HCT116 (cell line): ENCODE measurements at regions of chr7 and their contacts with region 1.

Region 1: DNA sequence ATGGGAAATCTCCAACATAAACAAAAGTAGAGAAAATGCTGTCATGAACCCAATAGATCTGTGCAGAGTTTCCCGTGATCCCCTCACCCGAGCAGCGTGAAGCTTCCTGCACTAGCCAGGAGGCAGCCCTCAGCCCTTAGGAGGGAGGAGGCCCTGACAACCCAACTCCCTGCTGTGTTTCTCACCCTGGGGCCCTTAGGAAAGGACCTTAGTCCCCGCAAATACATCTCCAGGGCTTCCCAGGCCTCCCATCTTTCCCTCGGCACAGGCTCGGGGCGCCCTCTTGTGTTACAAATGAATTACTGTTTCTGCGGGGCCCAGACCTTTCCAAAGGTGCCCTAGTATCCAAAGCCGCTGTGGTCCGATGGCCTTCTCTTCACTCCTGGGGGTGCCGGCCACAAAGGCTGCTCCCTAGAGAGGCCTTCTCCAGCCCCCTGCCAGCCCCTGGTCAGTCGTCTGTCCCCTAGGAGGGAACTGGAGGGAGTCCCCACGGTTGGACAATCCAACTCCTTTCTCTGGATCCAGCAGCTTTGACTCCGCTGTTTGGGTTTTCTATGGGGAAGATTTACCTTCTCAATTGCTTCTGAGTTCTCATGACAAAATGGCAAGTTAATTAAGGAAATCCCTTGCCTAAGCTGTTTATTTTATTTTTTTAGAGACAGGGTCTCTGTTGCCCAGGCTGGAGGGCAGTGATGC is 49.9 kb upstream of the SH2B2 start:
- DNase-seq: peak; percentile 28
- ATAC-seq: peak; percentile 96
- H3K4me3 ChIP-seq: no peak overlapping the region
- H3K27ac ChIP-seq: no peak overlapping the region
- H3K4me1 ChIP-seq: peaks cover 0 to 13% of the 10 kb centered on the region in 2 experiments; a peak in 1 of 4 replicates
- H3K27me3 ChIP-seq: no peaks in the 10 kb centered on the region
- CTCF ChIP-seq: peak; percentile 75 to 90 (median 86); a peak in 5 of 6 replicates
- POLR2A ChIP-seq: no peak
- RAD21 ChIP-seq: peak; percentile 98

Region 2: DNA sequence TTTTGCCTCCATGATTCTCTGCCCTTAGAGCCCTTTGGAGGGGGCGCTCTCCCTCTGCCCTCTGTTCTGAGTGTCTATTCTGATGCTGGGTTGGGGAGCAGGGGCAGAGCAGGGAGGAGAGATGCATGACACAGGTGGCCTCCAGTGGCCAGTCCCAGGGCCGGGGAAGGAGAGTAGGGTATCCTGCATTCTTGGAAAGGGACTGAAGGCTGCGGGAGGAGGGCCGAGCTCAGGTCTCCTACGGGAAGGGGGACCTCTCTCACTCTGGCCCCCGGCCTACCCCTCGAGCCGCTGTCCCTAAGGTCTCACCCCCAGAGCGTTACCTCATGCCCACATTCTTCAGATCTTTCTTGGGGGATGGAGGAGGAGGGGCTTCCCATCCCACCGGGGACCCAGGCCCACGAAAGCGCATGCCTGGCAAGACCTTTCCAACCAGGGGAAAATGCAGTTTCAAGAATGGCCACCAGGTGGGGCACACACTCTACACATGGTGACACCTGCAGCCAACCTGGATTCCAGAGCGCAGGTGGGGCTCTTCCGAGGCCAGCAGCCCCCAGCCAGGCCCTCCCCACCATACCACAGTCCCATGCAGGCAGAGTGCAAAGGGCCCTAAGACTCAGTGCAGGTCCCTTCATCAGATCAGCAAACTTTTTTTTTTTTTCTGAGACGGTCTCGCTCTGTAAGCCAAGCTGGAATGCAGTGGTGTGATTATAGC is 694.1 kb before region 1 on chr7:
- CTCF ChIA-PET with region 1: interaction called, 3 read pairs
- POLR2A ChIA-PET with region 1: no interaction called
- RAD21 ChIA-PET with region 1: no interaction called
- intact Hi-C with region 1: loop called (anchors 1 kb)
- DNase-seq: peak; percentile 33
- ATAC-seq: peak; percentile 71
- H3K4me3 ChIP-seq: no peak overlapping the region
- H3K27ac ChIP-seq: no peak overlapping the region
- H3K4me1 ChIP-seq: peaks cover 0 to 18% of the 10 kb centered on the region in 2 experiments; a peak in 2 of 4 replicates
- H3K27me3 ChIP-seq: no peaks in the 10 kb centered on the region
- CTCF ChIP-seq: peak; percentile 79 to 89 (median 88); a peak in 5 of 6 replicates
- POLR2A ChIP-seq: no peak
- RAD21 ChIP-seq: peak; percentile 99

Region 3: DNA sequence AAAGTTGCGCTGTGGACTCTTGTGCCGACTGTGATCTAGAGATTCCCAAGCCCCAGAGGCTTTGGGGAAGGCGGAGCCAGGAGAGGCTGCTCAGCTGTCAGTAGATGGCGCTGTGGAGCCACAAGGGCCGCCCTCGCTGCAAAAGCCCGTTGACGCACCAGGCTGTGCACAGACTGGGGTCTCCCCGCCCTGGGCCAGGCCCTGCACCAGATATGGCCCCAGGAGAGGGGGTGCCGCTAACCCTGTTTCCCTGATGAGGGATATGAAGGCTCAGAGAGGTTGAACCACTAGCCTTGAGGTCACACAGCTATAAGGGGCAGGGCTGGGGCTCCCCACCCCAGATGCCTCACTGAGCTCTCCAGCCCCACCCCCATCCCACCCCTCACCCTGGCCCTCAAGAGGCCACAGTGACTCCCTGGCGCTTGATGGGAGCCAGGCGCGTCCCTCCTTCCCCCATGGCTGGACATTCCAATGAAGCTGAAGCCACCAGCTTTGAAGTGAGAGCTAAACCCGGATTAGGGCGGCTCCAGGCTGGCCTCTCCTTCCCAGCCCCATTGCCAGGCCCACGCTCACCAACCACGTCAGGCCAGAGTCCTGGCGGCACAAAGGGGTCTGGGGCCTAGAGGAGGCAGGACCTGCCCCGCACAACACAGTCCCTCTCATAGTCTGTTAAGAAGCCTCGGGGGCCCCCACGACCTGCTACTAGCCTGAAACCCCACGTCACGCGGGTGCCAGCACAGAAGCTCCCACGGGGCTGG is 634.1 kb before region 1 on chr7:
- CTCF ChIA-PET with region 1: no interaction called
- POLR2A ChIA-PET with region 1: no interaction called
- RAD21 ChIA-PET with region 1: no interaction called
- intact Hi-C with region 1: loop called (anchors 1 kb)
- DNase-seq: peak; percentile 59
- ATAC-seq: peak; percentile 88
- H3K4me3 ChIP-seq: no peak overlapping the region
- H3K27ac ChIP-seq: no peak overlapping the region
- H3K4me1 ChIP-seq: peaks cover 19 to 30% of the 10 kb centered on the region in 2 experiments; a peak in 3 of 4 replicates
- H3K27me3 ChIP-seq: no peaks in the 10 kb centered on the region
- CTCF ChIP-seq: peak; percentile 82 to 96 (median 95)
- POLR2A ChIP-seq: no peak
- RAD21 ChIP-seq: peak; percentile 98

Region 4: GRCh38 chr7:101688183-101688831 is 548.4 kb before region 1 on chr7:
- CTCF ChIA-PET with region 1: no interaction called
- POLR2A ChIA-PET with region 1: no interaction called
- RAD21 ChIA-PET with region 1: no interaction called
- intact Hi-C with region 1: loop called (anchors 1 kb)
- DNase-seq: peak; percentile 34
- ATAC-seq: peak; percentile 94
- H3K4me3 ChIP-seq: peak overlapping the region; percentile 27 to 42
- H3K27ac ChIP-seq: no peak overlapping the region; the same call in 1 of the 2 replicates
- H3K4me1 ChIP-seq: peaks cover 5 to 13% of the 10 kb centered on the region in 2 experiments; a peak in 3 of 4 replicates
- H3K27me3 ChIP-seq: no peaks in the 10 kb centered on the region
- CTCF ChIP-seq: peak; percentile 82 to 89 (median 84)
- POLR2A ChIP-seq: no peak
- RAD21 ChIP-seq: peak; percentile 98

Region 5: DNA sequence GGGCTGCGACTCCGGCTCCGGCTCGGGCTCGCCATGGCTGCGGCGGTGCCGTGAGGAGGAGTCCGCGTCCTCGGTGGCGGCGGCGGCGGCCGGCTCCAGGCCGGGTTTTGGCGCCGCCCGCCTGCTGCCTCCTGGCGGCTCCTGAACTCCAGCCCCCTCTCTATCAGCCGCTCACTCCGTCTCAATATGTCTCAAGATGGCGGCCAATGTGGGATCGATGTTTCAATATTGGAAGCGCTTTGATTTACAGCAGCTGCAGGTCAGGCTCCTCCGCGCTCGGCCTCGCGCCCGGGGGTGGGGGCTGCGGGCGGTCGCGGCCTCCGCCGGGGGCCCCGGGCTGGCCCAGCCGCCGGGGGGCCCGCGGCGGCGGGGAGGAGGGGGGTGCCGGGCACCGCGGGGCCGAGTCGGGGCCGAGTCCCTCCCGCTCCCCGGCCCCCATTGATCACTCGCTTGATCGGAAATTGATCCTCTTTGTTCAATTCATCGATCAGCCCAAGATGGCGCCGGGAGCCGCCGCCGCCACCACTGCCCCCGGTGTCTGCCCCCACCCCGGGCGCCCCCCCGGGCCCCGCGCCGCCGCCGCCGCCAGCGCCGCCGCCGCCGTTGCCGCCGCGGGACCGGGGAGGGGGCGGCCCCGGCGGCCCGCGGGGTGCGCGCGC is 420.8 kb before region 1 on chr7:
- CTCF ChIA-PET with region 1: interaction called, 3 read pairs
- POLR2A ChIA-PET with region 1: no interaction called
- RAD21 ChIA-PET with region 1: no interaction called
- intact Hi-C with region 1: loop called (anchors 2 kb)
- DNase-seq: peak; percentile 73
- ATAC-seq: peak; percentile 61
- H3K4me3 ChIP-seq: peak overlapping the region; percentile 49 to 57
- H3K27ac ChIP-seq: peak overlapping the region; percentile 77
- H3K4me1 ChIP-seq: peaks cover 24 to 50% of the 10 kb centered on the region in 2 experiments
- H3K27me3 ChIP-seq: no peaks in the 10 kb centered on the region
- CTCF ChIP-seq: no peak; a peak in 1 of 6 replicates
- POLR2A ChIP-seq: no peak
- RAD21 ChIP-seq: no peak

Region 6: DNA sequence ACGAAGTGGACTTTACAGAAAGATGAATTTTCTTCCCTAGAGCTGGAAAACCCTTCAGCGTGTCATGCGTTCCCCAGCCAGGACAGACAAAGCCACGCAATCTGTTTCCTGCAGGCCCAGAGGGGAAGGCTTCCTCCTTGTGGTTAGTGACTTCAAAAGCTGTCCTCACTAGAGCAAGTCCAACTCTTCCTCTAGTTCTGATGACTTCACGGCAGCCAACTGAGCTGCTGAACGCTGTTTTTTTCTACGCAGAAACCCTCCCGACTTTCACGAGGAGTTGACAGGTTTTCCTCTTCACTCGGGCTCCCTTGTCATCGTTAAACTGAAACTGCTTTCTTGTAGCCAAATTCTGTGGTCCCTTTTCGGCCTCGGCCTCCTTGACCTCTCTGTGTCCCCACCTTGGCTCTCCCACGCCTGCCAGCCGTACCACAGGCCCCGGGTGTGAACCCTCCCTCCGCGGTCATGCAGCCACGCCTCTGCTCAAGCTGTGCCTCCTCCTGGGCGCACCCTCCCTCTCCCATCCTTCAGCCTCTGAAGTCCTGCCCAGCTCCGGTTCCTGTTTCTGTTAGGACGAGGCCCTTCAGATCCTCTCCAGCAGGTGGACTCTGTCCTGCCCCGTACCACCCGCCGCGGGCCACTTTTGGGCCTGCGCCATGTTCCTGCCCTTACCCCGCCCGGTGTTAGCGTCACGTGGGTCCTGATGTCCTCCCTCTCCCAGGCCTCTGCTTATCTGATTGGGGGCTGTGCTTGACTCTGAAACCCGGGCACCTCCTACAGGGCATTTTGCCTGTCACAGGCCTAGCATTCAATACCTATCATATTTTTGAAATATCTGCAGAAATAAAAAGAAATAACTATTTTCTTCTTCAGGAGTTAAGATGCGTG is 380.0 kb before region 1 on chr7:
- CTCF ChIA-PET with region 1: no interaction called
- POLR2A ChIA-PET with region 1: no interaction called
- RAD21 ChIA-PET with region 1: no interaction called
- intact Hi-C with region 1: loop called (anchors 10 kb)
- DNase-seq: peak; percentile 97
- ATAC-seq: peak; percentile 95
- H3K4me3 ChIP-seq: peak overlapping the region; percentile 23 to 45
- H3K27ac ChIP-seq: peak overlapping the region; percentile 69
- H3K4me1 ChIP-seq: peaks cover 22 to 52% of the 10 kb centered on the region in 2 experiments
- H3K27me3 ChIP-seq: no peaks in the 10 kb centered on the region
- CTCF ChIP-seq: peak; percentile 28 to 64 (median 59); a peak in 4 of 6 replicates
- POLR2A ChIP-seq: no peak
- RAD21 ChIP-seq: peak; percentile 75

Region 7: DNA sequence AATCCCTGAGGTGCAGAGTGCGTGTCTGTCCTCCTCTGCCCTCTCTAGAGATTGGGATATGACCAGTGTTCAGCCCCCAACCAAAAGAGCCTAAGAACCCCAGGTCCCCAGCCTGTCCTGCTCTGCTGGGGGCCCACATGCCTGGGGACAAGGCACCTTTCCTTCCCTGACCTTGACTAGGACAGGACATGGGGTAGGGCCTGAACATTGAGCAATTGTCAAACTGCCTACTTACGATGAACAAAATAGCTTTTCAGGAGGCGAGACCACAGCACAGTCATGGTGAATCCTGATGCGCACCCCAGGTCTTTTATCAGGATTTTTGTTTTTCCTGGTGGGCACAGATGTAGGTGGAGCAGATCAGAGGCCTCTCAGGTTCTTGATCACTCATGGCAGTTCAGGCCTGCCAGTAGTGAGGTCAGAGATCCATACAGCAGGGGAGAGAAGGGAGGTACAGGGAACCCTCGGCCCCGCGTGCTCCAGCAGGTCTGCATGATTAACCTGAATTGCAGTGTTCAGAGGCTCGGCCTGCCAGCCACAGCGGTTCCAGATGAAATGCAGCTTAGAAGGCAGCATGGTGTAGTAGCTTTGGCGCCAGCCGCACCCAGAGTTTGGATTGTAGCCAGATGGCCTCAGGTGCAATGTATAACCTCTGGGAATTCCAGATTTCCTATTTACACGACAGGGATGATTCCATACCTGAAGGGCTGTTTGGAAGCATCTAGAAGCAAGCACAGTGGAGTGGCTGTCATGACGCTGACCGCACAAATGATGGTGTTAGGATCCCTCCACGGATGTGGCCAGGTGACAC is 228.0 kb before region 1 on chr7:
- CTCF ChIA-PET with region 1: no interaction called
- POLR2A ChIA-PET with region 1: no interaction called
- RAD21 ChIA-PET with region 1: no interaction called
- intact Hi-C with region 1: no loop called
- DNase-seq: no peak
- ATAC-seq: no peak
- H3K4me3 ChIP-seq: no peak overlapping the region
- H3K27ac ChIP-seq: no peak overlapping the region
- H3K4me1 ChIP-seq: peaks cover 7 to 24% of the 10 kb centered on the region in 2 experiments; a peak in 3 of 4 replicates
- H3K27me3 ChIP-seq: no peaks in the 10 kb centered on the region
- CTCF ChIP-seq: no peak
- POLR2A ChIP-seq: no peak
- RAD21 ChIP-seq: no peak

Region 8: GRCh38 chr7:102119925-102120324 is 116.8 kb before region 1 on chr7:
- CTCF ChIA-PET with region 1: interaction called, 3 read pairs
- POLR2A ChIA-PET with region 1: no interaction called
- RAD21 ChIA-PET with region 1: no interaction called
- intact Hi-C with region 1: loop called (anchors 2 kb)
- DNase-seq: no peak
- ATAC-seq: no peak
- H3K4me3 ChIP-seq: no peak overlapping the region
- H3K27ac ChIP-seq: no peak overlapping the region
- H3K4me1 ChIP-seq: peaks cover 31 to 49% of the 10 kb centered on the region in 2 experiments
- H3K27me3 ChIP-seq: no peaks in the 10 kb centered on the region
- CTCF ChIP-seq: no peak
- POLR2A ChIP-seq: no peak
- RAD21 ChIP-seq: no peak

Region 9: GRCh38 chr7:102260856-102261255 is 24.1 kb after region 1 on chr7:
- CTCF ChIA-PET with region 1: no interaction called
- POLR2A ChIA-PET with region 1: no interaction called
- RAD21 ChIA-PET with region 1: no interaction called
- intact Hi-C with region 1: no loop called
- DNase-seq: no peak
- ATAC-seq: no peak
- H3K4me3 ChIP-seq: no peak overlapping the region
- H3K27ac ChIP-seq: no peak overlapping the region
- H3K4me1 ChIP-seq: no peaks in the 10 kb centered on the region
- H3K27me3 ChIP-seq: no peaks in the 10 kb centered on the region
- CTCF ChIP-seq: no peak
- POLR2A ChIP-seq: no peak
- RAD21 ChIP-seq: no peak